ENCODE measurements at regions of chr13 and their contacts with region 1.

Region 1: DNA sequence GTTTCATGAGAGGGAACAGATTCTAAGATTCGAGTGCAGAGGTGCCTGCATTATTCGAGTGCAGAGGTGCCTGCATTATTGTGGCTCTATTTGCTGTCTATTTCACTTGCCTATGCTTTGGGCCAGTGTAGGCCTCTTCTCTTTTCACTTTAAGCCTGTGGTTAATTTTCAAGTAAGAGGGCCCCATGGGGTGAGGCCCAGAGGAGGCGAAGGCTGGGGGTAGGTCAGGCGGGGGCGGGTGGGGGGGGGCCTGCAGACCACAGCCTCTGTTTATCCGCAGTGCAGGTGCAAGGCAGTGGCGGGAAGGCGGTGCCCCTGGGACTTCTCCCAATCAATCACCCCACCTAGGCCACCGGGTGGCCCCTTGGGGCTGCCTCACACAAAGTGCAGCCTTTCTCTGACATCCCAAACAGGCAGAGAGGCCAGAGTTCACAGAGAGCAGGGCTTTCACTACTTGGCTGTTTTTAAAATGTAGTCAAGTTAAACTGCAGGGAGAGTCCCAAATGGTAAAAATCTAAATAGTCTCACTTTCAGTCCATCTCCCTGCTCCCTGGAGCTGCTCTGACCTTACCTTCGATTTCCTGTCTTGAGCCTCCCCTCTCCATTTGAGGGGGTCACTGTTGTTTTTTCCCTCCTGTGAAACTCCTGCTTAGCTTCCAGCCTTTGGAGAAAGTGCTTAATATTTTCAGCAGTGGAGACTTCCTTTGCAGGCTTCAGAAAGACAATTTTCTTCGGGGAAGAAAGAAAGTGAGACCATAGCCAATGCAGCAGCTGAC is 249.0 kb downstream of the DLEU7 start:
- DNase-seq: peak; percentile 76
- ATAC-seq: peak; percentile 88
- H3K4me3 Mint-ChIP-seq: peak overlapping the region; percentile 73
- H3K27ac Mint-ChIP-seq: peak overlapping the region; percentile 98
- H3K4me1 Mint-ChIP-seq: peaks cover 95% of the 10 kb centered on the region
- H3K27me3 Mint-ChIP-seq: no peaks in the 10 kb centered on the region
- CTCF ChIP-seq: no peak

Region 2: GRCh38 chr13:50130123-50130946 is 464.1 kb before region 1 on chr13:
- CTCF ChIA-PET with region 1: no interaction called
- POLR2A ChIA-PET with region 1: interaction called, 39 read pairs
- intact Hi-C with region 1: loop called (anchors 1 kb)
- DNase-seq: peak; percentile 54
- ATAC-seq: peak; percentile 36
- H3K4me3 Mint-ChIP-seq: peak overlapping the region; percentile 89
- H3K27ac Mint-ChIP-seq: peak overlapping the region; percentile 95
- H3K4me1 Mint-ChIP-seq: peaks cover 60% of the 10 kb centered on the region
- H3K27me3 Mint-ChIP-seq: peaks cover 16% of the 10 kb centered on the region
- CTCF ChIP-seq: no peak

Region 3: GRCh38 chr13:50365408-50366391 is 228.8 kb before region 1 on chr13:
- CTCF ChIA-PET with region 1: no interaction called
- POLR2A ChIA-PET with region 1: interaction called, 6 read pairs
- intact Hi-C with region 1: loop called (anchors 1 kb)
- DNase-seq: no peak
- ATAC-seq: peak; percentile 28
- H3K4me3 Mint-ChIP-seq: peak overlapping the region; percentile 63
- H3K27ac Mint-ChIP-seq: peak overlapping the region; percentile 86
- H3K4me1 Mint-ChIP-seq: peaks cover 57% of the 10 kb centered on the region
- H3K27me3 Mint-ChIP-seq: no peaks in the 10 kb centered on the region
- CTCF ChIP-seq: no peak

Region 4: GRCh38 chr13:50531917-50532899 is 62.3 kb before region 1 on chr13:
- CTCF ChIA-PET with region 1: no interaction called
- POLR2A ChIA-PET with region 1: interaction called, 7 read pairs
- intact Hi-C with region 1: loop called (anchors 2 kb)
- DNase-seq: no peak
- ATAC-seq: no peak
- H3K4me3 Mint-ChIP-seq: no peak overlapping the region
- H3K27ac Mint-ChIP-seq: no peak overlapping the region
- H3K4me1 Mint-ChIP-seq: peaks cover 15% of the 10 kb centered on the region
- H3K27me3 Mint-ChIP-seq: no peaks in the 10 kb centered on the region
- CTCF ChIP-seq: no peak

Region 5: GRCh38 chr13:50635504-50635903 is 41.0 kb after region 1 on chr13:
- CTCF ChIA-PET with region 1: interaction called, 5 read pairs
- POLR2A ChIA-PET with region 1: interaction called, 7 read pairs
- intact Hi-C with region 1: loop called (anchors 1 kb)
- DNase-seq: no peak
- ATAC-seq: peak; percentile 75
- H3K4me3 Mint-ChIP-seq: peak overlapping the region; percentile 61
- H3K27ac Mint-ChIP-seq: peak overlapping the region; percentile 96
- H3K4me1 Mint-ChIP-seq: peaks cover 42% of the 10 kb centered on the region
- H3K27me3 Mint-ChIP-seq: no peaks in the 10 kb centered on the region
- CTCF ChIP-seq: no peak

Measured in activated B cell treated with CpG ODN at 0.5 μM for 24 hours (primary cell).